T-cell (primary cell): ENCODE measurements at regions of chr5 and their contacts with region 1.

Region 1: DNA sequence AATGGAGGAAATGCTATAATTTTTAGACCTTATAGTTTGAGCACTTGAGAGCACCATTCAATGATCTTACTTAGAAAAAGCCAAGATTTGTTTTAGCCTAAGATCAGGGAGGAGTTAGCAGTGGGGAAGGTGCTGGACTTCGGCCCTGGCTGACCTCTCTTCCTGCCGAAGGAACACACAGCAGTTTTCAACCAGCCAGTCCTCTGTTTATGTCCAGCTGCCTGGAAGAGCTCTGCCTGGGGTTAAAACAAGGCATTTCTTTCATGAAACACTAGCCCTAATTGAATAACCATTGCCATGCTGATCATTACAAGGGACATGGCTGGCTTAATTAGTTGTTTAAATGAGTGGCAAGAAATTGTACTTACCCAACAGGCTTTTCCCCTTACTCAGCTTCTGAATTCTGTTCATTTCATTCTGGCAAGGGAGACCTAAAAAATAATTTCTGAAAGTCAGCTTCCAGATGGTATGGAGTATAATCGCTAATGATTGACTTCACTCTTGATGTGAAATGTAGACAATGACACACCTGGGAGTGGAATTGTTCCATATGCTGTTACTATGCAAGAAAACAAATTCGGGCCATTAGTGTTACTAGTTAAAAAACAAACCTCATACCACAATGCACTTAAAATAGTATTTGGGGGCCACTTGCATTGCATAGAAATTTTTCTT is 514.2 kb downstream of the SPOCK1 start:
- DNase-seq: no peak
- ATAC-seq: no peak
- H3K4me3 ChIP-seq: no peak overlapping the region
- H3K4me3 Mint-ChIP-seq: no peak overlapping the region
- H3K27ac ChIP-seq: no peak overlapping the region
- H3K27ac Mint-ChIP-seq: no peak overlapping the region
- H3K4me1 ChIP-seq: no peaks in the 10 kb centered on the region
- H3K4me1 Mint-ChIP-seq: no peaks in the 10 kb centered on the region
- H3K27me3 ChIP-seq: no peaks in the 10 kb centered on the region
- H3K27me3 Mint-ChIP-seq: no peaks in the 10 kb centered on the region

Region 2: DNA sequence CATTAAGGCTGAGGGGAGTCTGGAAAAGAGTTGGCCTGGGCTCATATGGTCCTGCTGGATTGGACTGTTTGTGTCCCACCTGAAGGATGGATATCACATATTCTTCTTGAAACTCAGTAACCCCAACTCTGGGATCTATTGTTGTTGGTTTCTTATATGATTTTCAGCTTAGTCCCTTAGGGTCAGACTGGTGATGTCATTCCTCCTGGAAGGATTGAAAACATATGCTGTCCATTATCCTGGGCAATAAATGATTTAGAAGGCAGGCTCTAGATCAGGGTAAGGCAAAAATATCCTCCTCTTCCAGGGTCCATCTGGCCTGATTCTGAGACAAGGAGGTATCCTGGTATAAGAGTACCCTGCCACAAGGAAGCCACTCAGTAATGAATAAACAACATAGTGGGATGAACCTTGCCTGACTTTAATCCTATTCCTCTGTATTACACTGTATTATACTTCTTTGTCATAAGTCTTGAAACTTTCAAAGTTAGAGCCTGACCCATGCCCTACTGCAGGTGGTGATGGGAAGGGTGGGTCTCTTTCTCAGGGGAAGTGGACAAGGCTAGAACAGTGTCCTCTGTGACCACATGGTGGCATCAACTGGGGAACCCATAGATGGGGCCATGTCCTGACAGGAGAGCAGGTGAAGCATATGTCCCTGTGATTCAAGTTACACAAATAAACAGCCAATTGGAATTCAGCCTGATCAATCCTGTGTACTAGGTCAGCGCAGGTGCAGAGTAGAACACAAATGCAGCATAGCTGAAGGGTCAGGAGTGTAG is 165.2 kb before region 1 on chr5:
- CTCF ChIA-PET with region 1: no interaction called
- POLR2A ChIA-PET with region 1: interaction called in 1 of 2 experiments, 10 read pairs
- DNase-seq: no peak
- ATAC-seq: no peak
- H3K4me3 ChIP-seq: no peak overlapping the region
- H3K4me3 Mint-ChIP-seq: no peak overlapping the region
- H3K27ac ChIP-seq: no peak overlapping the region
- H3K27ac Mint-ChIP-seq: no peak overlapping the region
- H3K4me1 ChIP-seq: no peaks in the 10 kb centered on the region
- H3K4me1 Mint-ChIP-seq: no peaks in the 10 kb centered on the region
- H3K27me3 ChIP-seq: no peaks in the 10 kb centered on the region
- H3K27me3 Mint-ChIP-seq: no peaks in the 10 kb centered on the region

Region 3: GRCh38 chr5:137001026-137001569 is 16.2 kb after region 1 on chr5:
- CTCF ChIA-PET with region 1: no interaction called
- POLR2A ChIA-PET with region 1: no interaction called
- DNase-seq: no peak
- ATAC-seq: no peak
- H3K4me3 ChIP-seq: no peak overlapping the region
- H3K4me3 Mint-ChIP-seq: no peak overlapping the region
- H3K27ac ChIP-seq: no peak overlapping the region
- H3K27ac Mint-ChIP-seq: no peak overlapping the region
- H3K4me1 ChIP-seq: no peaks in the 10 kb centered on the region
- H3K4me1 Mint-ChIP-seq: no peaks in the 10 kb centered on the region
- H3K27me3 ChIP-seq: no peaks in the 10 kb centered on the region
- H3K27me3 Mint-ChIP-seq: peaks cover 0 to 4% of the 10 kb centered on the region in 2 donors

Region 4: GRCh38 chr5:137320056-137321045 is 335.4 kb after region 1 on chr5:
- CTCF ChIA-PET with region 1: no interaction called
- POLR2A ChIA-PET with region 1: no interaction called
- DNase-seq: peak in 2 of 35 experiments; percentile 0 to 33
- ATAC-seq: no peak
- H3K4me3 ChIP-seq: no peak overlapping the region
- H3K4me3 Mint-ChIP-seq: no peak overlapping the region
- H3K27ac ChIP-seq: no peak overlapping the region
- H3K27ac Mint-ChIP-seq: no peak overlapping the region
- H3K4me1 ChIP-seq: no peaks in the 10 kb centered on the region
- H3K4me1 Mint-ChIP-seq: no peaks in the 10 kb centered on the region
- H3K27me3 ChIP-seq: no peaks in the 10 kb centered on the region
- H3K27me3 Mint-ChIP-seq: peaks cover 27 to 28% of the 10 kb centered on the region in 2 donors